ENCODE measurements at regions of chr22 and their contacts with region 1.

Region 1: DNA sequence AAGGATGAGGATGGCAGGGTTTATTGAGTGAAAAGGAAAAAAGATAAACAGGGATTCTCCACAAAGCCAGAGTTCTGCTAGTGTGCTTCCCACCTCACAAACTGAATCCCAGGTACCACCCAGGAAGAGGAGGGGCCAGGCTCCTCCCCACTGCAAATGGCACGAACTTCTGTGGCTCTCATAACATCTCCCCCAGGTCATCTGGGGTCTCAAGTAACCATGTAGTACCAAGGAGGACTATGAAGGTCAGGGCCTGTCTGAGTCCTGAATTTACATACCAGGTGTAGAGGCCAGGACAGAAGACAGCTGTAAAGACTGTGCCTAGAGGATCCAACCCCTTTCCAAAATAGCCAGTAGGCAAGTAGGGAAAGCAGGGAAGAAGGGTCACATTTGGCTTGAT is 25.7 kb upstream of the GNAZ start:
- DNase-seq: no peak
- H3K4me3 ChIP-seq: no peak overlapping the region
- H3K27ac ChIP-seq: no peak overlapping the region
- H3K4me1 ChIP-seq: no peaks in the 10 kb centered on the region
- H3K27me3 ChIP-seq: no peaks in the 10 kb centered on the region
- CTCF ChIP-seq: no peak

Region 2: GRCh38 chr22:22955866-22956535 is 88.6 kb before region 1 on chr22:
- CTCF ChIA-PET with region 1: no interaction called
- dilution Hi-C with region 1: no loop called
- in situ Hi-C with region 1: no loop called
- intact Hi-C with region 1: no loop called
- DNase-seq: peak; percentile 41
- H3K4me3 ChIP-seq: no peak overlapping the region
- H3K27ac ChIP-seq: no peak overlapping the region
- H3K4me1 ChIP-seq: no peaks in the 10 kb centered on the region
- H3K27me3 ChIP-seq: no peaks in the 10 kb centered on the region
- CTCF ChIP-seq: peak; percentile 66 to 85

Region 3: DNA sequence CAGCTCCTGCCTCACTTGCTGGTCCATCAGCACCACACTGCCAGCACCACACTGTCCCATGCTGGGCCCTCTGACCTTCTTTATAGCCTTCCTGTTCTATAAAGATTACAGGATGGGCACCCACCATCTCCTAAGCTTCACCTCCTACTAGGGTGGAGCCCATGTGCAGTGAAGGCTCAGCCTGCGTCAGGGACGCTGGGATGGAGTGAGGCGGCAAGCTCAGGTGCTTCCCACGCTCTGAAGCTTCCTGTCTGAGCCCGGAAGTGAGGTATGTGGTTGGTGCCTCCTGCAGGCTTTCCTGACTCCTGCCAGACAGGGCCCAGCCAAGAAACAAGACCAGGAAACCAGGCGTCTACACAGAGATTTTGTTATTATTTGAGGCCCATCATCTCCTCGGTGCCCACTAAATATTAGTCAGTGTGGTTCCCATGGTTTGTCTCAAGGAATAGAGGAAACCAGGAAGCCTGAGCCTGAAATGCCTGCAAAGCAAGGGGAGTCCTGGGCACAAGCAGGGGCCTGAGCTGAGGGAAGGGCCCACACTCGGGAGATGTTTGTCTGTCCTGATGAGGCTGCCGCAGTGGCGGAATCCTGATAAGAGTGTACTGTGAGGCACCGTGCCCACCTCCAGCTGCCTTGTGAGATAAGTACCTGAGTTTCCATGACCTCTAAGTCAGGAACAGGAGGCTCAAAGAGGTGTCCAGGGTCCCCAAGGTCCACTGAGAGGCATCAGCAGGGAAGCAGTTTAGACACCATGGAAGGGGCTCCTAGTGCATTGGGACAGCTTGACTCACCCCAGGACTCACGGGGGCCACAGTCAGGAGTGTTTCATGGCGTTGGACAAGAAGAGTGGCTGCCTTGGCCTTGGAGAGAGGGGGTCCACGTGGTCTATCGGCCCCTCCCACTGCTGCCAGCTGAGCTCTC is 75.2 kb after region 1 on chr22:
- CTCF ChIA-PET with region 1: no interaction called
- dilution Hi-C with region 1: loop called (anchors 5 kb)
- in situ Hi-C with region 1: no loop called
- intact Hi-C with region 1: no loop called
- DNase-seq: no peak
- H3K4me3 ChIP-seq: no peak overlapping the region
- H3K27ac ChIP-seq: no peak overlapping the region
- H3K4me1 ChIP-seq: no peaks in the 10 kb centered on the region
- H3K27me3 ChIP-seq: no peaks in the 10 kb centered on the region
- CTCF ChIP-seq: no peak

Measured in mammary epithelial cell (primary cell).